Mammary epithelial cell (primary cell): ENCODE measurements at regions of chr22 and their contacts with region 1.

Region 1: DNA sequence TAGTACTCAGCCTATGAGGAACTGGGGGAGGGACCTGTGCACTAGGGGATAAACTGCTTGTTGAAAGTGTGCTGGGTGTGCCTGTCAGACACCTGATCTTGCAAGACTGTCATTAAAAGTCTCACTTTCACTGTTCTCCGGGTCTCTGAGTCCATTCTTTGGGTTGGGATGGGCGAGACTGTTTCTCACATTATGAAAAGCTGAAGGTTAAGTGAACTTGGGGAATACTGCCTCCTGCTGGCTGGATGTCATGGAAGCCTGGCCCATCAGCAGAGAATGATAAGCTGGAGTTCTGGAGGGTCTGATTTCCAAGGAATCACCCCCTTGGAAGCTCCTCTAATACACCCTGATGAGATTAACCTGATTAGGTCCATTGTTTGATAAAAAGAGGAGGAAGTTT is 9.0 kb upstream of the VPREB1 start:
- DNase-seq: peak; percentile 9
- H3K4me3 ChIP-seq: no peak overlapping the region
- H3K27ac ChIP-seq: no peak overlapping the region
- H3K4me1 ChIP-seq: no peaks in the 10 kb centered on the region
- H3K27me3 ChIP-seq: no peaks in the 10 kb centered on the region
- CTCF ChIP-seq: peak; percentile 62 to 75

Region 2: GRCh38 chr22:22201185-22201929 is 34.2 kb before region 1 on chr22:
- CTCF ChIA-PET with region 1: interaction called, 10 read pairs
- dilution Hi-C with region 1: loop called (anchors 5 kb)
- in situ Hi-C with region 1: no loop called
- intact Hi-C with region 1: no loop called
- DNase-seq: no peak
- H3K4me3 ChIP-seq: no peak overlapping the region
- H3K27ac ChIP-seq: no peak overlapping the region
- H3K4me1 ChIP-seq: no peaks in the 10 kb centered on the region
- H3K27me3 ChIP-seq: no peaks in the 10 kb centered on the region
- CTCF ChIP-seq: peak; percentile 89 to 91